CD4-positive, alpha-beta T cell (primary cell): ENCODE measurements at regions of chr19 and their contacts with region 1.

Region 1: DNA sequence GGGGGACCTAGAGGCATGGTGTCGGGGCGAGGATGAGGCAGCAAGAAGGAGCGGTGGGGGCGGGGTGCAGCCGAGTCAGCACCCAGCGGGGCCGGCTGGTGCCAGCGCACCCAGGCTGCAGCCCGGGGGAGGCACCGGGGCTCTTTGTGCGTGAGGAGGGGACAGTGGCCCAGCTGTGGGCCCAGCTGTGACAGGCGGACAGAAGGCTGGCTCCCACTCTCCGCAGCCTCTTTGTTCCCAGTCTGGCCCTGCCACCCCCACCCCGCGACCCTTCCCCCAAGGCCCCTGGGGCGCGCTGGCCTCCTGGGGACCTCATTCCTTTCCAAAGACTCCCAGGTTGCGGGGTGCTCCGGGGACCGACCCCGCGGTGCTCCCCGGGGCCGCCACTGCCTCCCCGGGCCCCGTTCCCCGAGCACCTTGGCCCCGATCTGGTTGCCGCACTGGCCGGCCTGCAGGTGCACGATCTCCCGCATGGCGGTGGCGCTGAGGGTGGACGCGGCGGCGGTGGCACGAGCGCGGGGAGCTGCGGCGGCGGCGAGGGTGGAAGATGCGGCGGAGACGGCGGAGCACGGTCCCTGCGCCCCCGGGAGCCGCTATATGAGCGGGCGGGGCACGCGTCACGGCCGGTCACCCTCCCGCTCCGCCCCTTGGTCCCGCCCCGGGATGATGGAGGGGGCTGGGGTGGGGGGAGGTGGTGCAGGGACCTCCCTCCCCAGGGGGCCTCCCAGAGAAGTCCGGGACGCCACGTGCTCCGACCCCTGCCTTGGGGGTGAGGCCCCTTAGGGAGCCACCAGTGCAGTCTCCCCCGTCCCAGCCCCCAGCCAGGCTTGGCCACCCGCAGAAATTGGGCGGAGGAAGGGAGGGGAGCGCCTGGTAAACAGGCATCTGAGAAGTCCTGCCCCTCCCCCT is at the start of gene TUBB4A:
- DNase-seq: peak in 9 of 14 experiments; percentile 31 to 55 (median 48)
- ATAC-seq: peak; percentile 28
- H3K4me3 ChIP-seq: peak within 1 kb of the TSS; percentile 47
- H3K4me3 Mint-ChIP-seq: peak within 1 kb of the TSS; percentile 93
- H3K27ac ChIP-seq: no peak within 1 kb of the TSS
- H3K27ac Mint-ChIP-seq: no peak within 1 kb of the TSS
- H3K4me1 ChIP-seq: peaks cover 24% of the 10 kb centered on the region
- H3K4me1 Mint-ChIP-seq: peaks cover 15% of the 10 kb centered on the region
- H3K27me3 ChIP-seq: peaks cover 13 to 21% of the 10 kb centered on the region in 2 experiments
- H3K27me3 Mint-ChIP-seq: peaks cover 23% of the 10 kb centered on the region
- CTCF ChIP-seq: peak; percentile 9
- total RNA-seq, gene TUBB4A: 0.53 to 0.88 TPM

Region 2: GRCh38 chr19:6312018-6312417 is 190.0 kb before region 1 on chr19:
- CTCF ChIA-PET with region 1: no interaction called
- POLR2A ChIA-PET with region 1: no interaction called
- intact Hi-C with region 1: loop called in 1 of 2 experiments (anchors 10 kb)
- DNase-seq: no peak
- ATAC-seq: no peak
- H3K4me3 ChIP-seq: no peak overlapping the region
- H3K4me3 Mint-ChIP-seq: no peak overlapping the region
- H3K27ac ChIP-seq: no peak overlapping the region
- H3K27ac Mint-ChIP-seq: no peak overlapping the region
- H3K4me1 ChIP-seq: no peaks in the 10 kb centered on the region
- H3K4me1 Mint-ChIP-seq: no peaks in the 10 kb centered on the region
- H3K27me3 ChIP-seq: no peaks in the 10 kb centered on the region
- H3K27me3 Mint-ChIP-seq: no peaks in the 10 kb centered on the region
- CTCF ChIP-seq: no peak

Region 3: GRCh38 chr19:6406401-6406800 is 95.6 kb before region 1 on chr19:
- CTCF ChIA-PET with region 1: no interaction called
- POLR2A ChIA-PET with region 1: no interaction called
- intact Hi-C with region 1: no loop called
- DNase-seq: no peak
- ATAC-seq: no peak
- H3K4me3 ChIP-seq: no peak overlapping the region
- H3K4me3 Mint-ChIP-seq: no peak overlapping the region
- H3K27ac ChIP-seq: no peak overlapping the region
- H3K27ac Mint-ChIP-seq: no peak overlapping the region
- H3K4me1 ChIP-seq: no peaks in the 10 kb centered on the region
- H3K4me1 Mint-ChIP-seq: no peaks in the 10 kb centered on the region
- H3K27me3 ChIP-seq: no peaks in the 10 kb centered on the region
- H3K27me3 Mint-ChIP-seq: no peaks in the 10 kb centered on the region
- CTCF ChIP-seq: no peak

Region 4: DNA sequence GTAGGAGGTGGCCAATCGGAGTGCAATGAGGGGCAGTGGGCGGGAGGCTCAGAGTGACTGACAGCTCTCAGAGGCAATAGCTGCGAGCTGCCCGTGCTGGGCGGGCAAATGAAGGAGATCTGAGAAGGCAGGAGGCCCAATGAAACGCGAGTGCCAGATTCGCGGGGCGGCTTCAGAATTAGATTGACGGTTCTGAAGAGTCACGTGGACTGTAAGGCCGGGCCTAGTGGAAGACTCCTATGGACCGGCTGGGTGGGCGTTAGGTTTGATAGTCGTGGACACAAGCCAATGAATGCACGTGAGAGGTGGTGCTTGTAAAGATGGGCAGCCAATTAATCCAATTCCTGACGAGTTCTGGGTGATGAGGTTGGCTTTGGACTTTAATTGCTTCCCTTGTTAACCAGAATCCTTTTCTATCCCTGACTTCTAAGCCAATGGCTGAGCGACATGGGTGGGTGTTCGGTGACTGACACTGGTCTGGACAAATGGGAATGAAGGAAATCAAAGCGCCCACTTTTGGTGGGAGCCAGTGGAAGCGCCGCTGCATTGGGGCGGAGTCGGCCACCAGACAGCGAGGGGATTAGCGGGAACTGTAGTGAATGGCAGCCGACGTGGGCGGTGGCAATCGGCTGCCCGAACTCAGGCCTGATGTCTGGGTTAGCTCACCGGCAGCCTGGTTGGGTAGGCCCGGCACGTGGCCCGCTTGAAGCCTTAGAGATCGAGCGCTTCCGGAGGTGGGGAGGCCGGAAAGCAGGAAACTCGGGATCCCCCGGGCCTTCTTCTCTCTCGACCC is 76.9 kb before region 1 on chr19:
- CTCF ChIA-PET with region 1: no interaction called
- POLR2A ChIA-PET with region 1: no interaction called
- intact Hi-C with region 1: loop called in 1 of 2 experiments (anchors 1 kb)
- DNase-seq: peak; percentile 96 to 100 (median 98)
- ATAC-seq: peak; percentile 83
- H3K4me3 ChIP-seq: peak overlapping the region; percentile 46
- H3K4me3 Mint-ChIP-seq: peak overlapping the region; percentile 90
- H3K27ac ChIP-seq: peak overlapping the region; percentile 75 to 87
- H3K27ac Mint-ChIP-seq: peak overlapping the region; percentile 81
- H3K4me1 ChIP-seq: peaks cover 48% of the 10 kb centered on the region
- H3K4me1 Mint-ChIP-seq: peaks cover 37% of the 10 kb centered on the region
- H3K27me3 ChIP-seq: no peaks in the 10 kb centered on the region
- H3K27me3 Mint-ChIP-seq: no peaks in the 10 kb centered on the region
- CTCF ChIP-seq: no peak

Region 5: DNA sequence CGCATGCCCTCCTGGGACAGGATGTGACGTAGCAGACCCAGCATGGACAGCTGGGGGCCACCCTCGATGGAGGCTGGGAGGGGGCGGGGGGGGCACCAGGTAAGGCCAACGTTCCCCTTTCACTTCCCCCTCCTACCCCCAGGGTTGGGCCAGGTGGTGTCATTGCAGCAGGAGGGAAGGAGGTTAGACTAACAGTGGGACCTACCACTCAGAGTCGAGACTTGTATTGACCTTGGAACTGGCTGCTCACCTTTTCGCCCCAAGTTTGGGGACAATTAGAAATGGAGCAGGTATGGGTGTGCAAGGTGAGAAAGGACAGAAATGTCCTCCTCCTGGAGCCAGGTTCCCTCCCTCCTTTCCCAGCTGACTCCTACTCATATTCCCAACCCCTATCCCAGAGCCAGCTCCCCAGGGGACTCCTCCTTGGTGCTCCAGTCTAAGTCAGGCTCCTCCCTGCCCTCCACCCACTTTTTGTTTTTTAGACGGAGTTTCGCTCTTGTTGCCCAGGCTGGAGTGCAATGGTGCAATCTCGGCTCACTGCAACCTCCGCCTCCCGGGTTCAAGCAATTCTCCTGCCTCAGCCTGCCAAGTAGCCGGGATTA is 59.8 kb before region 1 on chr19:
- CTCF ChIA-PET with region 1: no interaction called
- POLR2A ChIA-PET with region 1: no interaction called
- intact Hi-C with region 1: no loop called
- DNase-seq: no peak
- ATAC-seq: no peak
- H3K4me3 ChIP-seq: no peak overlapping the region
- H3K4me3 Mint-ChIP-seq: no peak overlapping the region
- H3K27ac ChIP-seq: no peak overlapping the region
- H3K27ac Mint-ChIP-seq: no peak overlapping the region
- H3K4me1 ChIP-seq: no peaks in the 10 kb centered on the region
- H3K4me1 Mint-ChIP-seq: no peaks in the 10 kb centered on the region
- H3K27me3 ChIP-seq: no peaks in the 10 kb centered on the region
- H3K27me3 Mint-ChIP-seq: no peaks in the 10 kb centered on the region
- CTCF ChIP-seq: no peak

Region 6: GRCh38 chr19:6481541-6482342 is 20.3 kb before region 1 on chr19 and contains the start of gene DENND1C:
- CTCF ChIA-PET with region 1: interaction called, 4 read pairs
- POLR2A ChIA-PET with region 1: no interaction called
- intact Hi-C with region 1: loop called in 1 of 2 experiments (anchors 2 kb)
- DNase-seq: peak; percentile 49 to 86 (median 66)
- ATAC-seq: peak; percentile 89
- H3K4me3 ChIP-seq: peak within 1 kb of the TSS; percentile 90
- H3K4me3 Mint-ChIP-seq: peak within 1 kb of the TSS; percentile 89
- H3K27ac ChIP-seq: peak within 1 kb of the TSS; percentile 87 to 93
- H3K27ac Mint-ChIP-seq: peak within 1 kb of the TSS; percentile 98
- H3K4me1 ChIP-seq: peaks cover 45% of the 10 kb centered on the region
- H3K4me1 Mint-ChIP-seq: peaks cover 46% of the 10 kb centered on the region
- H3K27me3 ChIP-seq: no peaks in the 10 kb centered on the region
- H3K27me3 Mint-ChIP-seq: no peaks in the 10 kb centered on the region
- CTCF ChIP-seq: no peak
- total RNA-seq, gene DENND1C: 111 to 118 TPM